Left cardiac atrium (tissue), 4 donors: ENCODE measurements at regions of chr11 and their contacts with region 1.

Region 1: DNA sequence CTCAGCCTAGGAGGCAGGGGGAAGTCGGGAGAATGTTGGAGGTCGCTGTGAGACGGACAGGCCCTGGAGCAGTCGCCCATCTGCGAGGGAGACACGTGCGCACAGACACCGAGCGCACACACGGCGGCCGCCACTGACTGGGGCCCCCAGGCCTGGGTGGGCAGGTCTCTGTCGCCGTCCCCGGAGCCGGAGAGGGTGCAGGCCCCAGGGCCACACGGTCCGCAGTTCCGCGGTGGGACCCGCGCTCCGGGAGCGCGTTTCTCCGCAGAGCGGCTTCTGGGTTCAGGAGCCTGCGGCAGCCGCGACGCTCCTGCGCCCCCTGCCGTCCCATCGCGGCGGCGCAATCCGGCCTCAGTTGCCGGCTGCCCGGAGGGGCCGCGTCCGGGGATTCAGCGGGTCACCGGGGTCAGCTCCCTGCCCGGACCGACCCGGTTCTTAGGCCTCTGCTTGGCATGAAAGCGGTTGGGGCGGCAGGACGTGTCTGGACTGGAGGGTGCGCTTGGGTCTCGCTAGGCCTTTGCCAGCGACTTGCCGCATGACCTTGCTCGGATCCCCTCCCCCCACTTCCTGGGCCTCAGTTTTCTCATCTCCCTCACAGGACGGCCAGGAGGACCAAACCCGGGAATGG is 31.2 kb downstream of the PDE2A start:
- DNase-seq: peak; percentile 72
- ATAC-seq: peak; percentile 79 to 84

Region 2: GRCh38 chr11:72471005-72471898 is 171.7 kb before region 1 on chr11:
- intact Hi-C with region 1: loop called in 1 of 2 experiments (anchors 10 kb)
- DNase-seq: peak; percentile 62
- ATAC-seq: peak; percentile 86 to 91

Region 3: DNA sequence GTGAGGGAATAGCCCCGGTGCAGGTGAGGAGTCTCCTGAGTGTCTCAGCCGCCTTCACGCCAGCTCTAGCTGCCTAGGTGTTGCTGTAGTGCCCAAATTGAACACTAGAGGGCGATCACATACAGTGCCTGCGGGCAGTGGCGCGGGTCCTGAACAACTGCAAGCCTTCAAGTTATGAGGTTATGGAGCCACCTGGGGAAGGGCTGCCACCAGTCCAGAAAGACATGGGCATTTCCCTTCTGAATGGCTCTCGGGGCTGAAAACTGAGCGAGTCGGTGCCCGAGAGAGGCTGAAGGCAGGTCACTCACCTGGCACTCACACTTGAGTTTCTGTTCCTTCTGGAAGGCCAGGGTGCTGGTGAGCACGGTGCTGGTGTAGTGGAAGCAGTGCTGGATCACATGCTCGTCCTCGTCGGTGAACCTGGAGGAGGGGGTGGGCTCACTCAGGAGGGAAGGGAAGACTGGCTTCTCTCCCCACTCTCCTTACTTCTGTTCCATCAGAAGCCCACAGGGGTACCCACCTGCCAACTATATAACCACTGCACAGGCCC is 57.2 kb before region 1 on chr11:
- intact Hi-C with region 1: loop called in 1 of 2 experiments (anchors 2 kb)
- DNase-seq: peak; percentile 69
- ATAC-seq: peak; percentile 66 to 69

Region 4: DNA sequence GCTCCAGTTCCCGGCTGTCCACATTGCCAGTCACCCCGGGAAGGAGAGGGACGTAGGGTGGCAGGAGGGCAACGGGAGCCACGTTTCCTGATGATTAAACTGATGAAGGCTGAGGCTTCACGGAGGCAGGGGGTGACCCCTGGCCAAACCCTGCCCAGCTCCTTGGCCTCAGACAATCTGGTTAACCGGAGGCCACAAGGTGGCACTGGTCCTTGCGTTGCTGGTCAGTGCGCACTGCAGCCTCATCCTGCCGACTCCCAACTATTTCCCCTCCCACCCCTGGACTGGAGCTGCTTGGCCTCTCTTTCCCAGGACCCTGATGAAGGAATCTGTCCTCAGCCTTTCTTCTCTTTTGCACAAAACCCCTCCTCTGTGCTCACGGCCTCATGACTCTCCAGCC is 44.1 kb before region 1 on chr11:
- intact Hi-C with region 1: loop called (anchors 1 to 2 kb)
- DNase-seq: peak; percentile 73
- ATAC-seq: peak; percentile 72 to 83